K562 (cell line): ENCODE measurements at regions of chr17 and their contacts with region 1.

Region 1: DNA sequence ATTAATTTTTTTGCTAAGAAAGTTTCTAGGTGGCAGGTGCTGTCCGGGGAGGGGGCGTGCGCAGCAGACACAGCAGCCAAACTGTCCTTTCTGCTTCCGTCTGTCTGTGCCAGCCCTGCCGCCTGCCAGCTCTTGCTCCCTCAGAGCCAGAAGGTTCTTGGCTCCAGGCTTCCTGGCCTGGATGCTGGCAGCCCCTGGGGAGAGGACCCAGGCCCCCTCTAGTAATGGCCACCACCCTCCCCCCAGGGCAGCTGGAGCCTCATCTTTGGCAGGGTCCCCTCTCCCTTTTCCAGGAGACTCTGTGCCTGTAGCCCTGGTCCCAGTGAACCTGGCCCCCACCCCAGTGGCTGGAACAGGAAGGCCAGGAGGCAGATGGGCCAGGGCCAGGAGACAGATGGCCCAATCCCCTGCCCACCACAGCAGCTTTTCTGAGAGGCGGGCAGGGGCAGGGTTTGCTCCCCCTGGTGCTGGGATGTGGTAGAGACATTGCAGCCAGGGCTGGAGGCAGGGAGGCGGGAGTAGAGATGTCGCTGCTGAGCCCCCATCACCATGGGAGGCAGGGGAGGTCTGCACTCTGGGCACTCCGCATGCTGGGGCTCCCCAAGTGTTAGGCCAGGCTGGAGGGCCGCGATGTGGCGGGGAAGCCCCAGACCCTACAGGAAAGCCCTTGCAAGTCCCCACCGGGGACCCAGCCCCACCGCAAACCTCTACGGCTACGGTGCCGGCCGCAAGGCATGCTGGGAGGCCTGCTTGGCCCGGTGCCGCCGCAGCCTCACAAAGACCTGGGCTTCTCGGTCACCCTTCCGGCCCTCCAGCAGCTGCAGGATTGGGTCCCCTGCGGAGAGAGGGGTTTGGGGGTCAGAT is 16.7 kb downstream of the UNC13D start:
- DNase-seq: peak in 3 of 4 experiments; percentile 58 to 65 (median 65)
- ATAC-seq: peak; percentile 62
- H3K4me3 ChIP-seq: no peak overlapping the region
- H3K27ac ChIP-seq: no peak overlapping the region
- H3K4me1 ChIP-seq: peaks cover 0 to 53% of the 10 kb centered on the region in 2 experiments; a peak in 2 of 5 replicates
- H3K27me3 ChIP-seq: no peaks in the 10 kb centered on the region
- CTCF ChIP-seq: peak; percentile 59 to 73 (median 64)
- EP300 ChIP-seq: no peak
- POLR2A ChIP-seq: 0 out of 2 replicates have a peak, but pooled peaks have one; percentile 1
- RAD21 ChIP-seq: peak in 1 of 2 experiments; percentile 54; a peak in 2 of 4 replicates

Region 2: GRCh38 chr17:75814900-75815373 is 12.5 kb before region 1 on chr17:
- CTCF ChIA-PET with region 1: no interaction called
- POLR2A ChIA-PET with region 1: interaction called, 34 read pairs
- in situ Hi-C with region 1: no loop called
- intact Hi-C with region 1: no loop called
- DNase-seq: no peak
- ATAC-seq: no peak
- H3K4me3 ChIP-seq: no peak overlapping the region
- H3K27ac ChIP-seq: no peak overlapping the region
- H3K4me1 ChIP-seq: peaks cover 0 to 21% of the 10 kb centered on the region in 2 experiments; a peak in 2 of 5 replicates
- H3K27me3 ChIP-seq: no peaks in the 10 kb centered on the region
- CTCF ChIP-seq: no peak
- EP300 ChIP-seq: no peak
- POLR2A ChIP-seq: no peak
- RAD21 ChIP-seq: no peak

Region 3: GRCh38 chr17:75914643-75915267 is 87.3 kb after region 1 on chr17:
- CTCF ChIA-PET with region 1: no interaction called
- POLR2A ChIA-PET with region 1: no interaction called
- in situ Hi-C with region 1: no loop called
- intact Hi-C with region 1: no loop called
- DNase-seq: peak in 3 of 4 experiments; percentile 20 to 59 (median 37)
- ATAC-seq: peak; percentile 79
- H3K4me3 ChIP-seq: no peak overlapping the region
- H3K27ac ChIP-seq: no peak overlapping the region
- H3K4me1 ChIP-seq: peaks cover 0 to 50% of the 10 kb centered on the region in 2 experiments; a peak in 2 of 5 replicates
- H3K27me3 ChIP-seq: no peaks in the 10 kb centered on the region
- CTCF ChIP-seq: no peak
- EP300 ChIP-seq: no peak
- POLR2A ChIP-seq: no peak
- RAD21 ChIP-seq: no peak

Region 4: GRCh38 chr17:76053246-76054116 is 226.0 kb after region 1 on chr17:
- CTCF ChIA-PET with region 1: no interaction called
- POLR2A ChIA-PET with region 1: no interaction called
- in situ Hi-C with region 1: no loop called
- intact Hi-C with region 1: no loop called
- DNase-seq: peak in 2 of 4 experiments; percentile 57 to 62
- ATAC-seq: peak; percentile 82
- H3K4me3 ChIP-seq: no peak overlapping the region
- H3K27ac ChIP-seq: peak overlapping the region; percentile 71
- H3K4me1 ChIP-seq: peaks cover 5 to 9% of the 10 kb centered on the region in 2 experiments; a peak in 3 of 5 replicates
- H3K27me3 ChIP-seq: no peaks in the 10 kb centered on the region
- CTCF ChIP-seq: no peak
- EP300 ChIP-seq: no peak
- POLR2A ChIP-seq: no peak
- RAD21 ChIP-seq: no peak